Mammary epithelial cell (primary cell): ENCODE measurements at regions of chr3 and their contacts with region 1.

Region 1: DNA sequence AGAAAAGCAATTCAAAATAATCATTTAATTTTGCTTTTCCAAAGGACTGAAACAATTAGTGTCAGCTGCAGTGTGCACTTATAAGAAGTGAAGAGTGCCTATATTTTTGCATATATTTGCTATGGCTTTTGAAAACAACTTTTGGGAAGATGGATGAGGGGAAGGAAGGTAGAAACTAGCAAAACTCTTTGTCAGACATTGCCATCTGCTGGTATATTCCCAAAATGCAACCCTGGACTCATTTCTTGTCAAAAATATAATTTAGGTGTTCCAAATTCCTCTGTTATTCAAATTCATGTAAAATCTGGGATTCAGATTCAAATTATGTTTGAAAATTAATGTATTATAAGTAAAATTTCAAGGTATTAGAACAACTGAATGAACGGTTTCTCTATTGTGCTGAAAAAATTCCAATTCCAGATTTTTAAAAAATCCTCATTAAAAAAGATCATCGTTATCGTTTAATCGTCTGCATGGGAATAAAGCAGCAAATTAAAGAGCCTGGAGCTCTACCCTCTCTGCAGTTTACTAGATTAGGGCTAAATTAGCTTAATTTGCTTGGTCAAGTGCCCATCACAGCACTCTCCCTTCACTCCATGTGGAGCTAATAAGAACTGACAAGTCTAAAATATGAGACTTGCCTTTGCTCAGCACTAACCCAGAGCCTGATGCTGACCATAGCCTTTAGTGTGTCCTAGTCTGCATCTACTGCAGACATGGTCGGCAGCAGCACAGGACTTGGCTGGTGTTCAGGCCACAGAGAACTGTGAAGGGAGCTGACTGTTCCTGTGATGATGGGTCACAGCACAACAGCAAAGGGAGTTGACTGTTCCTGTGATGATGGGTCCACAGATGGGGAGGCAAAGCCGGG is 67.9 kb upstream of the MITF start:
- DNase-seq: peak; percentile 27
- H3K4me3 ChIP-seq: no peak overlapping the region
- H3K27ac ChIP-seq: no peak overlapping the region
- H3K4me1 ChIP-seq: no peaks in the 10 kb centered on the region
- H3K27me3 ChIP-seq: no peaks in the 10 kb centered on the region
- CTCF ChIP-seq: peak; percentile 71 to 84

Region 2: GRCh38 chr3:69013253-69014021 is 657.9 kb before region 1 on chr3 and contains the start of gene EOGT:
- CTCF ChIA-PET with region 1: no interaction called
- dilution Hi-C with region 1: no loop called
- in situ Hi-C with region 1: no loop called
- intact Hi-C with region 1: loop called (anchors 10 kb)
- DNase-seq: peak; percentile 85
- H3K4me3 ChIP-seq: peak within 1 kb of the TSS; percentile 67 to 83 (median 82)
- H3K27ac ChIP-seq: peak within 1 kb of the TSS; percentile 87
- H3K4me1 ChIP-seq: peaks cover 49% of the 10 kb centered on the region
- H3K27me3 ChIP-seq: no peaks in the 10 kb centered on the region
- CTCF ChIP-seq: peak; percentile 26 to 73
- total RNA-seq, gene EOGT: 52.4 to 194 TPM

Region 3: GRCh38 chr3:69161587-69162307 is 509.6 kb before region 1 on chr3:
- CTCF ChIA-PET with region 1: no interaction called
- dilution Hi-C with region 1: loop called (anchors 25 kb)
- in situ Hi-C with region 1: loop called (anchors 10 kb)
- intact Hi-C with region 1: loop called (anchors 1 kb)
- DNase-seq: peak; percentile 47
- H3K4me3 ChIP-seq: no peak overlapping the region
- H3K27ac ChIP-seq: no peak overlapping the region
- H3K4me1 ChIP-seq: no peaks in the 10 kb centered on the region
- H3K27me3 ChIP-seq: no peaks in the 10 kb centered on the region
- CTCF ChIP-seq: peak; percentile 90 to 93

Region 4: DNA sequence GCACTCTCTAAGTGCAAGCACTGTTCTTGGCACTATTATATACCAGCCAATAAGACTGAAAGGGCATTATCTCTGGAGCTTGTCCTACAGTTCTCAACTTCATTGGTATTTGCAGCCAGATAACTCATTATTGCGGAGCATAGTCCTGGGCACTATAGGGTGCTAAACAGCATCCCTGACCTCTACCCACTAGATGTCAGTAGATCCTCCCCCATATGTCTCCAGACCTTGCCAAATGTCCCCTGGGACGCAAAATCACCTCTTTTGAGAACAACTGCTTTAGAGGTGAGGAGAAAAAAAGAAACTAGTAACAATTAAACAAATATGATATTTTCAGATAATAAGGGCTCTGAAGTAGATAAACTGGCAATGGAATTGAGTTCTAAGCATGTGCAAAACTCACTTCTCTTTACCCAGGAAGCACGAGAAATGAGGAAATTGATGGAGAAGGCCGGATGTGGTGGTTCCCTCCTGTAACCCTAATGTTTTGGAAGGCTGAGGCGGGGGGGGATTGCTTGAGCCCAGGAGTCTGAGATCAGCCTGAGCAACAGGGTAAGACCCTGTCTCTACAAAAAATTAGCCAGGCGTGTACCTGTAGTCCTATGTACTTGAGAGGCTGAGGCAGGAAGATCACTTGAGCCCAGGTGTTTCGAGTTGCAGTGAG is 346.8 kb before region 1 on chr3:
- CTCF ChIA-PET with region 1: no interaction called
- dilution Hi-C with region 1: loop called (anchors 25 kb)
- in situ Hi-C with region 1: loop called in 1 of 2 experiments (anchors 25 kb)
- intact Hi-C with region 1: loop called (anchors 1 kb)
- DNase-seq: no peak
- H3K4me3 ChIP-seq: no peak overlapping the region
- H3K27ac ChIP-seq: no peak overlapping the region
- H3K4me1 ChIP-seq: no peaks in the 10 kb centered on the region
- H3K27me3 ChIP-seq: no peaks in the 10 kb centered on the region
- CTCF ChIP-seq: peak; percentile 17 to 51

Region 5: GRCh38 chr3:69439643-69440270 is 231.6 kb before region 1 on chr3:
- CTCF ChIA-PET with region 1: no interaction called
- dilution Hi-C with region 1: no loop called
- in situ Hi-C with region 1: loop called in 1 of 2 experiments (anchors 25 kb)
- intact Hi-C with region 1: loop called (anchors 2 kb)
- DNase-seq: no peak
- H3K4me3 ChIP-seq: no peak overlapping the region
- H3K27ac ChIP-seq: no peak overlapping the region
- H3K4me1 ChIP-seq: no peaks in the 10 kb centered on the region
- H3K27me3 ChIP-seq: no peaks in the 10 kb centered on the region
- CTCF ChIP-seq: peak; percentile 66 to 70

Region 6: GRCh38 chr3:69542221-69543079 is 128.9 kb before region 1 on chr3:
- CTCF ChIA-PET with region 1: no interaction called
- dilution Hi-C with region 1: no loop called
- in situ Hi-C with region 1: no loop called
- intact Hi-C with region 1: loop called (anchors 2 kb)
- DNase-seq: peak; percentile 67
- H3K4me3 ChIP-seq: peak overlapping the region; percentile 77 to 89 (median 88)
- H3K27ac ChIP-seq: peak overlapping the region; percentile 94
- H3K4me1 ChIP-seq: peaks cover 20% of the 10 kb centered on the region
- H3K27me3 ChIP-seq: no peaks in the 10 kb centered on the region
- CTCF ChIP-seq: no peak